Activated T-helper 1 cell treated with anti-CD3 and anti-CD28 coated beads, Interleukin-12 subunit alpha, Interleukin-12 subunit beta, Interleukin-2, Interleukin-4 antibody, amounts not matched to agents 30 ng/mL and 10 ng/mL and 1 ng/mL, durations not matched to agents 14 hours and 24 hours and 36 hours (primary cell): ENCODE measurements at regions of chr17 and their contacts with region 1.

Region 1: GRCh38 chr17:18141210-18141803 is 32.8 kb downstream of the MYO15A start:
- DNase-seq: peak; percentile 11
- H3K4me3 Mint-ChIP-seq: no peak overlapping the region
- H3K27ac Mint-ChIP-seq: no peak overlapping the region
- H3K4me1 Mint-ChIP-seq: peaks cover 5% of the 10 kb centered on the region
- H3K27me3 Mint-ChIP-seq: peaks cover 4% of the 10 kb centered on the region

Region 2: GRCh38 chr17:18158022-18158600 is 16.8 kb after region 1 on chr17:
- intact Hi-C with region 1: loop called (anchors 1 kb)
- DNase-seq: peak; percentile 87
- H3K4me3 Mint-ChIP-seq: peak overlapping the region; percentile 77
- H3K27ac Mint-ChIP-seq: peak overlapping the region; percentile 79
- H3K4me1 Mint-ChIP-seq: peaks cover 4% of the 10 kb centered on the region
- H3K27me3 Mint-ChIP-seq: no peaks in the 10 kb centered on the region

Region 3: DNA sequence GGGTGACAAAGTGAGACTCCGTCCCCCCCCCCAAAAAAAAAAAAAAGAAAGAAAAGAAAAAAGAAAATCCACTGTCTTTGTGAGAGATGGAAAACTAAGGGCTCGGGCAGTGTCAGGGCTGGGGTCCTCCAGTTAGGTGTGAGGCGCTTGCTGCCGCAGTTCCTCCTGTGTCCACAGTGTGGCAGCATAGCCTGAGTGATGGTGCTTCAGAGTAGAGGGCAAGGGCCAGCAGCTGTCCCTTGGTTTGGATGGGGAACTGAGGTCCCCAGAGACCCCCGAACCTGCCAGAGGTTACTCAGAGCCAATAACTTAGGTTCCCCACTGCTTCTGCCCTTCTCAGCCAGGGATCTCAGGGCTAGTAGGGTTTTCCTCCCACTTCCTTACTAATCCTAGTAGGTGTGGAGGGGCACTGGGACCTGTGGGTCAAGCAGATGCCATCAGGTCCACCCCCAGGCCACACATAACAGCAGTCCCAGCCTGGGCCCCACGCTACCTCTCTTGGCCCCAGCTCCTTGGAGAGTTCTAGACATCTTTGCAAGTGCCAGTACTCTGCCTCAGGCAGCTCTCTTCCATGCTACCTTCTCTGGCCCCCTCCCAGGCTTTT is 76.2 kb after region 1 on chr17:
- intact Hi-C with region 1: loop called (anchors 1 kb)
- DNase-seq: peak; percentile 65
- H3K4me3 Mint-ChIP-seq: no peak overlapping the region
- H3K27ac Mint-ChIP-seq: no peak overlapping the region
- H3K4me1 Mint-ChIP-seq: peaks cover 5% of the 10 kb centered on the region
- H3K27me3 Mint-ChIP-seq: no peaks in the 10 kb centered on the region